ENCODE measurements at regions of chr7 and their contacts with region 1.

Region 1: GRCh38 chr7:129664029-129665012 is 52.8 kb downstream of the NRF1 start:
- DNase-seq: no peak
- ATAC-seq: peak; percentile 50 to 71

Region 2: DNA sequence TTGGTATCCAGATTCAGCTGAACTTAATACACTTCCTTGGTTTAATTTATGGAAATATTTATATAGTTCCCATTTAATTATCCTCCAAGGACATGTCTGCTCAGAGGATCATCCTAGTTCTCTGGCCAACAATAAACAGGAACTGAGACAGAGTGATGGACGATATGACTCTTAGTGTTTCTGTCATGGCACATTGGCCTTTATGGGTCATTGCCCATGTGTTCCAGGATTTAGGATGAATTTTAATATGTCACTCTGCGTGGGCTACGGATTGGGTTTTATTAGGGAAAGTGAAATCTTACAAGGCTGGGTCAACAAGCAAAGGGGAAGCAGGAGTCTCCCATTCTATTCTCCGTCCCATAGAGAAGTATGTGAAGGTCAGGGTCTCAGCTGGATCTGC is 590.6 kb before region 1 on chr7:
- intact Hi-C with region 1: no loop called
- DNase-seq: no peak
- ATAC-seq: no peak

Region 3: DNA sequence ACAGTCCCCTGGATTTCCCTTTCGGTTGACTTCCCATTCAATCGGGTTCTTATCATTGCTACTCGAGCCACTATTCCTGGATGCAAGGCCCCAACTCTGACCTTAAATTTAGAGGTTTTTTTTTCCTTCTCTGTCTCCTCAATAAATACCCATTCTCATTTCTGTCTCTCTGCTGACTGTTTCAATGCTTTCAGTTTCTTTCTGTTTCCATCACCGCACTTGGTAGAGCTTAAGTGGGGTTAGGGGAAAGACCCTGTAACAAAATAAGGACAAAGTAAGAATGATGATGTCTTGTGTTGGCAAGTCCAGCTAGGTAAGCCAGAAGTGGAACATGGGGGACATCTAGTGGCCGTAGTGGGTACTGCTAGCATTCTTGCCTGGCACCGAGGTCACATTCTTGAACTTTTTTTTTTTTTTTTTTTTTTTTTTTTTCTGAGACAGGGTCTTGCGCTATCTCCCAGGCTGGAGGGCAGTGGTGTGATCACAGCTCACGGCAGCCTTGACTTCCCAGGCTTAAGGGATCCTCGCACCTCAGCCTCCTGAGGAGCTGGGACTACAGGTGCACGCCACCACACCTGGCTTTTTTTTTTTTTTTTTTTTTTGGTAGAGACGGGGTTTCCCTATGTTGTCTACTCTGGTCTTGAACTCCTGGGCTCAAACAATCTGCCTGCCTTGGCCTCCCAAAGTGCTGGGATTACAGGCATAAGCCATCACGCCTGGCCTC is 346.5 kb after region 1 on chr7:
- intact Hi-C with region 1: loop called (anchors 5 kb)
- DNase-seq: peak; percentile 72
- ATAC-seq: peak; percentile 71 to 76

Measured in left cardiac atrium (tissue), 4 donors.